Breast epithelium (tissue), 4 donors: ENCODE measurements at regions of chr4 and their contacts with region 1.

Region 1: GRCh38 chr4:6204871-6205566 is 4.7 kb upstream of the JAKMIP1 start:
- DNase-seq: peak in 1 of 2 donors; percentile 17
- H3K4me3 ChIP-seq: no peak overlapping the region
- H3K27ac ChIP-seq: no peak overlapping the region
- H3K4me1 ChIP-seq: no peaks in the 10 kb centered on the region
- H3K27me3 ChIP-seq: peaks cover 2 to 6% of the 10 kb centered on the region in 2 donors
- CTCF ChIP-seq: no peak
- POLR2A ChIP-seq: no peak

Region 2: DNA sequence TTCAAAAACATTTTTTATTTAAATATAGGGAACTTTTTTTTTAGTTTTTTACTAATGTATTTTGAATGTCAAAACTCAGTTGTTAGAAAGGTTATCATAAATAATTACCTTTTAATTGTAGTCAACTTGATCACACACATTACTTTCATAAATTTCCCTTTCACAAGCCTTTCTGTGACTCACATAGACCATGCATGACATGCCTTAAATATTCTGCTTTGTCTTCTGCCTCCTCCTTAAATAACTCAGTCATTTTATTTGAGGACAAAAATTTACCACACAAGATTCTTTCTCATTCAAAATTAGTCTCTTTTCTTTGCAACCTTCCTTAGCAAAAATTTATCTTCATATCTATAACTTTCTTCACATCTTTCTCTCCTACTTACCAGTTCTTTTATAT is 716.6 kb before region 1 on chr4:
- intact Hi-C with region 1: no loop called
- DNase-seq: no peak
- H3K4me3 ChIP-seq: no peak overlapping the region
- H3K27ac ChIP-seq: no peak overlapping the region
- H3K4me1 ChIP-seq: no peaks in the 10 kb centered on the region
- H3K27me3 ChIP-seq: no peaks in the 10 kb centered on the region
- CTCF ChIP-seq: no peak
- POLR2A ChIP-seq: no peak

Region 3: GRCh38 chr4:5998333-5998936 is 206.6 kb before region 1 on chr4:
- intact Hi-C with region 1: no loop called
- DNase-seq: peak in 1 of 2 donors; percentile 28
- H3K4me3 ChIP-seq: no peak overlapping the region
- H3K27ac ChIP-seq: no peak overlapping the region
- H3K4me1 ChIP-seq: no peaks in the 10 kb centered on the region
- H3K27me3 ChIP-seq: peaks cover 0 to 31% of the 10 kb centered on the region in 2 donors
- CTCF ChIP-seq: peak in 2 of 3 donors; percentile 65 to 75
- POLR2A ChIP-seq: no peak

Region 4: DNA sequence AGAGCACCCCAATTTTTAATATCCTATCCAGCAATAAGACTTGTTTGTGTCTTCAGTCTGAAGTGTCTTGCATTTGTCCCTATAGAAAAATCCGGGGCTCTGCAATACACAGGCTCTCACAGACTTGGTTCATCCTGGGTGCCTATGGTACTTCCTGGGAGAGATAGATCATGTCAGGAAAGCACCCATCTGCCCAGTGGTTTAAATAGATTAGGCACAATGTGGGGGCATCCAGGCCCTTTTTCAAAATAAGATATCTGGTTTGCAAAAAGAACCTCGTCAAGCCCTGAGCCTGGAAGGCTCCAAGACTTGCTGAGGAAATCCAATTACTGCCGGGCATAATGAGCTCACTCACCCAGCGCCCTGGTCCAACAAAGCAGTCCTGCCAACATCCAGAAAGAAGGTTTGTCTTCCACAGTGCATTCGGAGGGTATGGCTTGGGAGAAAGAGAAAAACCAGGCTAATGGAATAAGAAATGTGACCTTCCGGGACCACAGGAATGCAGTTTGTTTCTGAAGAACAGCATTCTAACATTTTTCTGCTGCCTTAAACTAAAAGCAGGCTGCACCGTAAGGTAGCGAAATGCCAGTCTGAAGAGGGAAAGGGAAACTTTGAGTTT is 16.2 kb before region 1 on chr4:
- intact Hi-C with region 1: no loop called
- DNase-seq: no peak
- H3K4me3 ChIP-seq: no peak overlapping the region
- H3K27ac ChIP-seq: no peak overlapping the region
- H3K4me1 ChIP-seq: no peaks in the 10 kb centered on the region
- H3K27me3 ChIP-seq: peaks cover 0 to 7% of the 10 kb centered on the region in 2 donors
- CTCF ChIP-seq: no peak
- POLR2A ChIP-seq: no peak

Region 5: DNA sequence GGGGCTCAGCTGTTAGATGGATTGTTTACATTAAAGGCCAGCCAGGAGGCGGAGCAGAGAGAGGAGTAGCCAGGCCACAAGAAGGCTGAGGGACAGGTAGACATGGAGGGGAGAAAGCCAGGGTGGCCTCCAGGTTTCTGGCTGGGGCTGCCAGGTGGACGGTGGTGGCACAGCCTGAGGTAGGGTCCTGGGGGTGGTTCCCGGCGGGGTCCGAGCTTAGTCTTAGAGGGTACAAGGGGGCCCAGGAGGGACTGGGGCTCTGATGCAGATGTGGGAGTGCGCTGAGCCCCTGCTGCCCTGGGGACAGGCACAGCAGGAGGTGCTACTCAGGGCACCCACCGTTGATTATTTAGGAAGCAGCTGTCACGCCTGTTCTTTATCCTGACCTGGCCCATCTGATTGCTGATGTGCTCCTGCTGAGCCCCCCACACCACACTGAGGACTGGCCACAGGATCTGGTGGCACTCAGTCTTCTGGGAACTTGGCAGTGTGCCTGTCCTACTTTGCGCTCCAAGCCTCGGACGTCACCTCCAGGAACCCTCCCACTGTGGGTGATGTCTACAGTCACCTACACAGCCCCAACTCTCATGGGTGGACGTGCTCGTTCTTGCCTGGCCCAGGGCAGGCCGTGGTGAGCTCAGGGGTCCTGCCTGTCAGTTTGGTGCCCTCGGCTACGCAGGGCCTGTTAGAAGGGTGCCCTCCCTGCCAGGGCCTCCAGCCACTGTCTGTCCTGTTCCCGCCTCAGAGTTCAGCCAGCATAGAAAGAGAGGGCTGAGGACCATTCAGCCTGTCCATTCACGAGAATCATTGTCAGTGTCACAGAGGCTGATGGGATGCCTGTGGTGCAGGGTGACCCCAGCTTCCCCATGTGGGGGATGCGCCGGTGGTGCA is 76.6 kb after region 1 on chr4:
- intact Hi-C with region 1: loop called (anchors 2 kb)
- DNase-seq: no peak
- H3K4me3 ChIP-seq: no peak overlapping the region
- H3K27ac ChIP-seq: peak overlapping the region; percentile 52 to 81
- H3K4me1 ChIP-seq: no peaks in the 10 kb centered on the region
- H3K27me3 ChIP-seq: no peaks in the 10 kb centered on the region
- CTCF ChIP-seq: no peak
- POLR2A ChIP-seq: no peak